B cell (primary cell): ENCODE measurements at regions of chr2 and their contacts with region 1.

Region 1: DNA sequence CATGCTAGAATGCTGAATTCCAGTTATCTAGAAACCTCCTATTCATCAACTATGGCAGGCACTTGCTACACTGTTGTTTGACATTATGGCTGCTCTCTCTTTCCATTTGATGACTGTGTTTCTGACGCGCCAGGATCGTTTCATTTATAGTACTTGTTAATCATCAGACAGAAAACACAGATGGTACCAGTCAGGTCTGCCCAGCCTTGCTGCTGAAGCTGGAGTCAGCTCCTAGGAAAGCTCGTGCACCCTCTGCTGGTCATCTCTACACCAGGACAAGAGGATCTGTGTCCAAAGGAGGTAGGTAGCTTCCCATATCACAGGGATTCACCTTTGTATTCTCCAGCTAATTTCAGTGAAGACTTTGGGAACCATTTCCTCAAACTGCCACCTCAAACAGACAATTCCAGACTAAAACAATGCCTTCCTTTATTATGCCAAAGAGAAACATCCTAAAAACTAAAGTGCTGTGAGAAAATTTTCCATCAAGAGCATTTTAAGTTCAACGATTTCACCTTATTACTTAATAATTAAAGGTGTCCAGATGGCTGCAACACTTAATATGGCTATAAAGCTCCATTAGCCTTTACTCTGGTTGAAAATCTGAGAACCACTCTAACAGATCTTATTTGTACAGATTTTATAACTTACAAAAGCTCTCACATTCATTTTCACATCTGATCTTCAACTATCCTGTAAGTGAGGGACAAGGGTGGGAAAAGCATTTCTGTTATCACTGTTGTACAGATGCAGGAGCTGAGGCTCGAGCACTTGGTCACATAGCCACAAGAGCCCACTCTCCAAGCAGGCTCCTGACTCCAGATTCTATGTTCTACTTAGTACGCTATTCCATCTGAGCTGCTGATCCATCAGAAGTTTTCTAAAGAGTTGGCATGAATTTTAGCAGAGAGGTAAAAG is 17.5 kb downstream of the METTL8 start:
- DNase-seq: peak; percentile 89
- ATAC-seq: peak; percentile 97
- H3K4me3 ChIP-seq: no peak overlapping the region
- H3K4me3 Mint-ChIP-seq: peak overlapping the region; percentile 21
- H3K27ac ChIP-seq: peak overlapping the region; percentile 47 to 71
- H3K27ac Mint-ChIP-seq: peak overlapping the region; percentile 77
- H3K4me1 ChIP-seq: peaks cover 15% of the 10 kb centered on the region in 2 donors
- H3K4me1 Mint-ChIP-seq: peaks cover 16% of the 10 kb centered on the region
- H3K27me3 ChIP-seq: no peaks in the 10 kb centered on the region
- H3K27me3 Mint-ChIP-seq: no peaks in the 10 kb centered on the region
- CTCF ChIP-seq: peak; percentile 83

Region 2: DNA sequence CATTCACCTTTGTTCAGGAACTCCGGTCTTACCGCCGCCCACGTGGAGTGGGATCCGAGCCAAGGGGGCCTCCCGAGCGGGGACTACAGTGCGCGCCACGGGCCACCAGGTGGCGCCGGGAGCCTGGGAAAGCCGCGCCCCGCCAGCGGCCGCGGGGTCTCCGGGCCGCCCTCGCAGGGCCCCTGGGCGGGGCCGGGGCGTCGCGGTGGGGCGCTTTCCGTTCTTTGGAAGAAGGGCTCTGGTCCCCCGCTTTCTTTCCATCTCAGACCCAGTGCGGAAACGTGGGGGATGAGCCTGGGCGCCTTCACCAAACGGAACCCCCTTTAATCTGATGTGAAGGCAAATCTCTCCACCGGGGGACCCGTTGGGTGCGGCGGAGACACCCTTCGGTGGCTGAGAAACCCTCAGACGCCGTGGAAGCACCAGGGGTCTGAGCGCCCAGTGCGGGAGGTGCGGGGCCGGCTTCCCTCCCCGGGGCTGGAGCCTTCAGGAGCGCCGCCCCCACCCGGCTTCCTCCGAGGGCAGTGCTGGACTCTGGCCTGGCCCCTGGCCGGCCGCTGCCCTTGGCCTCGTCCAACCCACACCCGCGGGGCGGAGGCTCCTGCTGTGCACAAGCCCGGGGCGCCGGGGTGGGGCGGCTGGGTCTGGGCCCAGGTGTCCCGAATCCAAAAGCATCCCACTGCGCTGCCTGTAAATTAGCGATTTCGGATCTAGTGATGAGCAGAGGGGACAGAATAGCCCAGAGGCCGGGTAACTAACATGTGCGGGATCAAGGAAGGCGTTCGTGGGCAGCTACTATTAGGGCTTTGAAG is 442.6 kb before region 1 on chr2:
- CTCF ChIA-PET with region 1: interaction called, 42 read pairs
- POLR2A ChIA-PET with region 1: interaction called, 4 read pairs
- intact Hi-C with region 1: loop called (anchors 1 kb)
- DNase-seq: peak; percentile 92
- ATAC-seq: peak; percentile 97
- H3K4me3 ChIP-seq: peak overlapping the region; percentile 43 to 86 (median 80)
- H3K4me3 Mint-ChIP-seq: peak overlapping the region; percentile 92
- H3K27ac ChIP-seq: peak overlapping the region; percentile 42 to 61
- H3K27ac Mint-ChIP-seq: peak overlapping the region; percentile 78
- H3K4me1 ChIP-seq: peaks cover 11 to 12% of the 10 kb centered on the region in 2 donors
- H3K4me1 Mint-ChIP-seq: peaks cover 12% of the 10 kb centered on the region
- H3K27me3 ChIP-seq: no peaks in the 10 kb centered on the region
- H3K27me3 Mint-ChIP-seq: no peaks in the 10 kb centered on the region
- CTCF ChIP-seq: peak; percentile 94

Region 3: GRCh38 chr2:171086352-171087290 is 329.6 kb before region 1 on chr2:
- CTCF ChIA-PET with region 1: interaction called, 27 read pairs
- POLR2A ChIA-PET with region 1: no interaction called
- intact Hi-C with region 1: loop called (anchors 2 kb)
- DNase-seq: peak; percentile 57
- ATAC-seq: peak; percentile 63
- H3K4me3 ChIP-seq: no peak overlapping the region
- H3K4me3 Mint-ChIP-seq: no peak overlapping the region
- H3K27ac ChIP-seq: peak overlapping the region in 1 of 2 donors; percentile 1
- H3K27ac Mint-ChIP-seq: peak overlapping the region; percentile 17
- H3K4me1 ChIP-seq: peaks cover 3% of the 10 kb centered on the region in 2 donors
- H3K4me1 Mint-ChIP-seq: peaks cover 43% of the 10 kb centered on the region
- H3K27me3 ChIP-seq: no peaks in the 10 kb centered on the region
- H3K27me3 Mint-ChIP-seq: no peaks in the 10 kb centered on the region
- CTCF ChIP-seq: peak; percentile 66

Region 4: GRCh38 chr2:171319164-171319810 is 97.0 kb before region 1 on chr2:
- CTCF ChIA-PET with region 1: interaction called, 23 read pairs
- POLR2A ChIA-PET with region 1: interaction called, 4 read pairs
- intact Hi-C with region 1: loop called (anchors 1 kb)
- DNase-seq: peak; percentile 53
- ATAC-seq: peak; percentile 21
- H3K4me3 ChIP-seq: peak overlapping the region in 3 of 5 experiments; percentile 4 to 48 (median 12)
- H3K4me3 Mint-ChIP-seq: peak overlapping the region; percentile 80
- H3K27ac ChIP-seq: peak overlapping the region; percentile 73 to 79
- H3K27ac Mint-ChIP-seq: peak overlapping the region; percentile 91
- H3K4me1 ChIP-seq: peaks cover 67 to 77% of the 10 kb centered on the region in 2 donors
- H3K4me1 Mint-ChIP-seq: peaks cover 73% of the 10 kb centered on the region
- H3K27me3 ChIP-seq: no peaks in the 10 kb centered on the region
- H3K27me3 Mint-ChIP-seq: no peaks in the 10 kb centered on the region
- CTCF ChIP-seq: no peak

Region 5: DNA sequence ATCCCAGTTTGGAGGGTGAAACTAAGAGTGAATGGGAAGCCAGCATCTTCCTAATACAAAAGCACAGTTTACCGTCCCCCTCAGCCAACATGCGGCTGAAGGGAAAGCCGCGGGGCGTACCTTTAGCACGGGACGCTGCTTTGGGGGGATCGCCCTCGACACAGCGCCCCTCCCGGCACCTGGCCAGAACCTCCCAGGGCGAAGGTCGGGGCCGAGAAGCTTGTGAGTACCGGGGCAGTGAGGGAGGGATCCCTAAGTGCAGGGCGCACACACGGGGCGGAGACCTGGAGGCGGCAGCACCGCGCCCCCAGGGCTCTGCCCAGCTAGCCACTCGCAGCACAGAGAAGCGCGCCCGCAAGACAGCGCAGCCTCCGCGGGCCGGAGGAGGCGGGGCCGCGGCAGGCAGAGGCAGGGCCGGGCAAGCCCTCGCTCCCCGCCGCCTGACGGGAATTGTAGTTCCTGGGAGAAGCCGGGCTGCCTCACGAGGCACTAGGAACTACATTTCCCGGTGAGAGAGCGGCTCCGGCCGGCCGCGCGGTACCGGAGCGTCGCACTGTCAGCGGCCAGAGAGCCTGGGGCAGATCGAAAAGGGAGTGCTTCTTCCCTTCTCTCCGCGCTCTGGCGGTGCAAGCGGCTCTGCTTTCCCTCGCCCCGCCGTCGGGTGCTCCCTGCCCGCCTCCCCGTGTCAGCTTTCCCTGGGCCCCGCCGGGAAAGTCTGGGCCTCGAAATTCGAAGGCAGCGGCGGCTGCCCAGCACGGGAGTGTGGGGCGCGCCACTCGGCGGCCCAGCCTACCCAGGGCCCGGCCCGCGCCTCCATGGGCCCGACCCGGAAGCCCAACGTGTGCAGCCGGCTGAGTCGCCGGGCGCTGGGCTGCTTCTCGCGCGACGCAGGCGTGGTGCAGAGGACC is 17.7 kb after region 1 on chr2 and contains the starts of genes DCAF17 and METTL8:
- CTCF ChIA-PET with region 1: interaction called, 17 read pairs
- POLR2A ChIA-PET with region 1: interaction called, 5 read pairs
- intact Hi-C with region 1: loop called (anchors 1 kb)
- DNase-seq: peak; percentile 96
- ATAC-seq: peak; percentile 89
- H3K4me3 ChIP-seq: peak within 1 kb of the TSS; percentile 67 to 87 (median 80)
- H3K4me3 Mint-ChIP-seq: peak within 1 kb of the TSS; percentile 91
- H3K27ac ChIP-seq: peak within 1 kb of the TSS; percentile 84 to 85
- H3K27ac Mint-ChIP-seq: peak within 1 kb of the TSS; percentile 96
- H3K4me1 ChIP-seq: peaks cover 7 to 10% of the 10 kb centered on the region in 2 donors
- H3K4me1 Mint-ChIP-seq: peaks cover 24% of the 10 kb centered on the region
- H3K27me3 ChIP-seq: no peaks in the 10 kb centered on the region
- H3K27me3 Mint-ChIP-seq: no peaks in the 10 kb centered on the region
- CTCF ChIP-seq: peak; percentile 61
- total RNA-seq, gene DCAF17: 27.9 and 29.4 TPM in 2 replicates
- total RNA-seq, gene METTL8: 57.8 and 58.6 TPM in 2 replicates

Region 6: DNA sequence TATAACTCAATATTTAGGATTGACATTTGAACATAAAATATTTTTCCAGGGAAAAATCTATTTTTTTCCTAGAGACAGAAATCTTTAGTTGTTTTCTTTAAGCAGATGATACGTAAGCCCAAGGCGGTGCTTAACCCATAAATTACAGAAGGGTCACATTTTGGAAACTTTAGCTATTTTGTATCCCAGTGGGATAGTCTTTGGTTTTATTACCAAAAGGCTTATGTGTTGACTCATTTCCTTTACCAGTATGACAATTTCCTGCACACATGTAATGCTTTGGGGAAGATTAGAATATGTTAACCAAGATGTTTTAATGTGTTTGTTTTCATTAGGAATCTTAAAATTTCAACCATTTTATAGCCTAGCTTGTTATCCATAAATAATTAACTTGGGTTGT is 295.8 kb after region 1 on chr2:
- CTCF ChIA-PET with region 1: no interaction called
- POLR2A ChIA-PET with region 1: no interaction called
- intact Hi-C with region 1: no loop called
- DNase-seq: no peak
- ATAC-seq: no peak
- H3K4me3 ChIP-seq: no peak overlapping the region
- H3K4me3 Mint-ChIP-seq: no peak overlapping the region
- H3K27ac ChIP-seq: no peak overlapping the region
- H3K27ac Mint-ChIP-seq: no peak overlapping the region
- H3K4me1 ChIP-seq: no peaks in the 10 kb centered on the region
- H3K4me1 Mint-ChIP-seq: no peaks in the 10 kb centered on the region
- H3K27me3 ChIP-seq: no peaks in the 10 kb centered on the region
- H3K27me3 Mint-ChIP-seq: no peaks in the 10 kb centered on the region
- CTCF ChIP-seq: no peak